Activated T-helper 2 cell treated with anti-CD3 and anti-CD28 coated beads, Interferon-gamma antibody, Interleukin-2, Interleukin-4, amounts not matched to agents 10 μg/mL and 5 μg/mL and 100 μg/mL, durations not matched to agents 14 hours and 24 hours and 36 hours (primary cell): ENCODE measurements at regions of chr5 and their contacts with region 1.

Region 1: DNA sequence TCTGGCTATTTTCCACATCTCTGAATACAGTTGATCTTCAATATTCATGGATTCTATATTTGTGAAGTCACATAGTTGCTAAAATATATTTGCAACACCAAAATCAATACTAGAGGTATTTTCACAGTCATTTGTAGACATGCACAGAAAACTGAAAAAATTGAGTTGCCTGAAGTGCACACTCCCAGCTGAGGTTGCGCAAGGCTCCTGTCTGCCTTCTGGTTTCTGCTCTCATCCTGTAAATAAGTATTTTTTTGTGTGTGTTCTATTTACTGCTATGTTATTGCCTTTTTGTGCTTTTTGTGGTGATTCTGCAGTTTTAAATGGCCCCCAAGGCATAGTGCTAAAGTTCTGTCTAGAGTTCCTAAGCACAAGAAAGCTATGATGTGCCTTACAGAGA is 371.1 kb upstream of the GRAMD2B start:
- DNase-seq: no peak
- H3K4me3 Mint-ChIP-seq: no peak overlapping the region
- H3K27ac Mint-ChIP-seq: peak overlapping the region; percentile 34
- H3K4me1 Mint-ChIP-seq: peaks cover 19% of the 10 kb centered on the region
- H3K27me3 Mint-ChIP-seq: no peaks in the 10 kb centered on the region

Region 2: GRCh38 chr5:125961150-125961549 is 91.0 kb before region 1 on chr5:
- intact Hi-C with region 1: loop called (anchors 2 kb)
- DNase-seq: peak; percentile 11
- H3K4me3 Mint-ChIP-seq: no peak overlapping the region
- H3K27ac Mint-ChIP-seq: no peak overlapping the region
- H3K4me1 Mint-ChIP-seq: peaks cover 2% of the 10 kb centered on the region
- H3K27me3 Mint-ChIP-seq: no peaks in the 10 kb centered on the region

Region 3: GRCh38 chr5:126066836-126067235 is 14.7 kb after region 1 on chr5:
- intact Hi-C with region 1: no loop called
- DNase-seq: no peak
- H3K4me3 Mint-ChIP-seq: no peak overlapping the region
- H3K27ac Mint-ChIP-seq: no peak overlapping the region
- H3K4me1 Mint-ChIP-seq: no peaks in the 10 kb centered on the region
- H3K27me3 Mint-ChIP-seq: no peaks in the 10 kb centered on the region

Region 4: DNA sequence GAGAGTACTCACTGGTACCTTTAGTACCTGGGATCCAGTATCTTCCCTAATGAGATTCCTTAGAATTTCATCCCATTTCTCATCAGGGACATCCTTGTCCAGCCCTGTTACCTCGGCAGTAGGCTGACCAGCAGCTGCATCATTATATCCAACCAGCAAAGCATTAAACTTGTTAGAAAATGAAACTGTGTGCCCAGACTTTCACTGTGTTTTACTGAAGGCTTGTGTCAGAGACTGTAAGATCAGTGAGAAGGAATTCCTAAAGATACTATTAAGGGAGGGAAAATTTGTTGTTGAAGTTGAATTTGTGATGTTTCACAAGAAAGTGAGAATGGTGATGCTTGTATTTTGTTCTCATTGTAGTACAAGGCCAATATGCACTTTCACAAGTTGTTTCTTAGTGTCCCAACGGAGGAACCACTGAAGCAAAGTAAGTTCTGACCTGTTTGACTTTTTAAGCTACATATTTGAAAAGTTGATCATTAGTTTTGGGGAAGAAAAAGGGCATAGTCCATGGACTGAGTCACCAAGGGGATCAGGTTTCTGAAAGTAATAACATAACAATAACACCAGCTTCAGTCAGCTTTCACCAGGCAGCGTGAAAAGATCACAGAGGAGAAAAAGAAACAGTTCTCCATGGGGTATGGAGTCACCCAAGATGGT is 419.9 kb after region 1 on chr5:
- intact Hi-C with region 1: no loop called
- DNase-seq: no peak
- H3K4me3 Mint-ChIP-seq: no peak overlapping the region
- H3K27ac Mint-ChIP-seq: no peak overlapping the region
- H3K4me1 Mint-ChIP-seq: peaks cover 2% of the 10 kb centered on the region
- H3K27me3 Mint-ChIP-seq: no peaks in the 10 kb centered on the region